ENCODE measurements at regions of chr12 and their contacts with region 1.

Region 1: DNA sequence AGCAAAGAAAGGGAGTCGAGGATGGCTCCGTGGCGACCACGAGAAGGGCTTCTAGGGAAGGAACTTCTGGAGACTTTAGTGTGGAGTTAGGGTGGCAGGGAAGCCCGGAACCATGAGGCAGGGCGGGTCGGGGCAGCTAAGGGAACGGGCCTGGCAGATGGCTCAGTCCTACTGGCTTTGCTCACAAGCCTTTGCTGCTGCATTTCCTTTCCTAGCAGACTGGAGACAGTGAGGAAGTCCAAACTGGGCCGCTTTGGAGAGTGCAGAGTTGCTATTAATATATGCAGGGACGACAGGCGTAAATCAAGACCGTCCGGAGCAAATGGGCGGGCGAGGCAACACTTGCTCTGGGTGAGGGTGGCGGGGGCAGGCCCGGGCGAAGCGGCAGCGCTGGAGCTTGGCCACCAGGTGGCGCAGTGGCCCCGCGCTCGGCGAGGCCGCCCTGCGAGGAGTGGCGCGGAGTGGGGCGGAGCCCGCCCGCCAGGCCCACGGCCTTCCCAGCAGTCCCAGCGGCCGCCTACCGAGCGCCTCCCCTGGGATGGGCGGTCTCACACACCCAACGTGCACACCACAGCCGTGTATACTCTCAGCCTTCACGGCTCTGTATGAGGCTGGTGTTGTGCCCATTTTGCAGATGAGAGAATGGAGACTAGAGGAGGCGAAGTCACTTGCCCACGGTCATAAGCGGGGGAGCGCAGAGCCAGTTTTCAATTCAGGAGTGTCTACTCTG is 24.4 kb upstream of the LRTM2 start:
- DNase-seq: peak; percentile 89
- H3K4me3 ChIP-seq: peak overlapping the region; percentile 32 to 62 (median 35)
- H3K27ac ChIP-seq: no peak overlapping the region
- H3K4me1 ChIP-seq: peaks cover 12% of the 10 kb centered on the region
- H3K27me3 ChIP-seq: no peaks in the 10 kb centered on the region
- CTCF ChIP-seq: peak; percentile 88 to 99
- POLR2A ChIP-seq: peak; percentile 67

Region 2: DNA sequence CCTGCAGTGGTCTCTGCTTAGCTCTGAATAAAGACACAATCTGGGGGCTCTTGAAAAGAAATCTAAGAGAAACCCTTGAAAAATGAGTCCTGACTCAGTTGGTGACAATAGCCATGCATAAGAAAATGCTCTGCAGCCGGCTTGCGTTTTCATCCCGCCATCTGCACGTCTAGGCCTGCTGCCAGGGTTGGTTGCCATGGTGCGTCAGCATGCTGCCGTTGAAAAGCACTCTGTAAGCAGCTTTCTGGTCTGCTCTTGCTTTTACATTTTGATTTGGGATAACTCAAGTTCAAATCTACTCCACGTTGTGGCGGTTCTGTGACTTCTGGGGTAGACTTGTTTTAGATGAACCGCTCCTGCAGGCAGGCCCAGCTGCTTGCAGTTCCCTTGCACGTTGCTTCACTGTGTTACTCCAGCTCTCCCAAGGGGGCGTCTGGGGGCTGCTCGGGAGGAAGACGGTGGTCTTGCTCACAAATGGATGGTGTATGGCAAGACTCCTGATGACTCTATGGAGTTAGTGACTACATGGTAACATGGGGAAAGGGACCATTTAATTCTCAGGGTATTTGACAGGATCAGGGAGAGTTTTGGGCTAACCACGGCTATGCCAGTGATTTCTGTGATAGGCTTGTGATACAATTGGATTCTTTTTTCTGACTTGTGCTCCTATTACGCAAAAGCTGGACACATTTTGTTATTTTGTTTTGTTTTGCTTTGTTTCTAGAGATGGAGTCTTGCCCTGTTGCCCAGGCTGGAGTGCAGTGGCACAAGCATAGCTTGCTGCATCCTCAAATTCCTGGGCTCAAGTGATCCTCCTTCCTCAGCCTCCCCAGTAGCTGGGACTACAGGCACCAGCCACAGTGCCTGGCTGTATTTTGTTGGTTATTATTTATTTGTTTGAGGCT is 151.2 kb before region 1 on chr12:
- CTCF ChIA-PET with region 1: interaction called, 840 read pairs
- POLR2A ChIA-PET with region 1: no interaction called
- dilution Hi-C with region 1: no loop called
- intact Hi-C with region 1: no loop called
- DNase-seq: peak; percentile 82
- H3K4me3 ChIP-seq: no peak overlapping the region
- H3K27ac ChIP-seq: no peak overlapping the region
- H3K4me1 ChIP-seq: no peaks in the 10 kb centered on the region
- H3K27me3 ChIP-seq: peaks cover 24 to 27% of the 10 kb centered on the region in 2 experiments
- CTCF ChIP-seq: no peak
- POLR2A ChIP-seq: no peak

Region 3: GRCh38 chr12:1668833-1669543 is 127.0 kb before region 1 on chr12:
- CTCF ChIA-PET with region 1: interaction called, 13 read pairs
- POLR2A ChIA-PET with region 1: no interaction called
- dilution Hi-C with region 1: no loop called
- intact Hi-C with region 1: no loop called
- DNase-seq: peak; percentile 76
- H3K4me3 ChIP-seq: no peak overlapping the region
- H3K27ac ChIP-seq: no peak overlapping the region
- H3K4me1 ChIP-seq: peaks cover 8% of the 10 kb centered on the region
- H3K27me3 ChIP-seq: no peaks in the 10 kb centered on the region
- CTCF ChIP-seq: no peak
- POLR2A ChIP-seq: no peak

Region 4: GRCh38 chr12:1698638-1699214 is 97.2 kb before region 1 on chr12:
- CTCF ChIA-PET with region 1: interaction called, 20 read pairs
- POLR2A ChIA-PET with region 1: no interaction called
- dilution Hi-C with region 1: no loop called
- intact Hi-C with region 1: no loop called
- DNase-seq: no peak
- H3K4me3 ChIP-seq: no peak overlapping the region
- H3K27ac ChIP-seq: no peak overlapping the region
- H3K4me1 ChIP-seq: no peaks in the 10 kb centered on the region
- H3K27me3 ChIP-seq: no peaks in the 10 kb centered on the region
- CTCF ChIP-seq: no peak
- POLR2A ChIP-seq: no peak

Region 5: GRCh38 chr12:1781772-1782171 is 14.2 kb before region 1 on chr12:
- CTCF ChIA-PET with region 1: interaction called, 11 read pairs
- POLR2A ChIA-PET with region 1: no interaction called
- dilution Hi-C with region 1: no loop called
- intact Hi-C with region 1: no loop called
- DNase-seq: no peak
- H3K4me3 ChIP-seq: no peak overlapping the region
- H3K27ac ChIP-seq: no peak overlapping the region
- H3K4me1 ChIP-seq: peaks cover 9% of the 10 kb centered on the region
- H3K27me3 ChIP-seq: no peaks in the 10 kb centered on the region
- CTCF ChIP-seq: no peak
- POLR2A ChIP-seq: no peak

Region 6: DNA sequence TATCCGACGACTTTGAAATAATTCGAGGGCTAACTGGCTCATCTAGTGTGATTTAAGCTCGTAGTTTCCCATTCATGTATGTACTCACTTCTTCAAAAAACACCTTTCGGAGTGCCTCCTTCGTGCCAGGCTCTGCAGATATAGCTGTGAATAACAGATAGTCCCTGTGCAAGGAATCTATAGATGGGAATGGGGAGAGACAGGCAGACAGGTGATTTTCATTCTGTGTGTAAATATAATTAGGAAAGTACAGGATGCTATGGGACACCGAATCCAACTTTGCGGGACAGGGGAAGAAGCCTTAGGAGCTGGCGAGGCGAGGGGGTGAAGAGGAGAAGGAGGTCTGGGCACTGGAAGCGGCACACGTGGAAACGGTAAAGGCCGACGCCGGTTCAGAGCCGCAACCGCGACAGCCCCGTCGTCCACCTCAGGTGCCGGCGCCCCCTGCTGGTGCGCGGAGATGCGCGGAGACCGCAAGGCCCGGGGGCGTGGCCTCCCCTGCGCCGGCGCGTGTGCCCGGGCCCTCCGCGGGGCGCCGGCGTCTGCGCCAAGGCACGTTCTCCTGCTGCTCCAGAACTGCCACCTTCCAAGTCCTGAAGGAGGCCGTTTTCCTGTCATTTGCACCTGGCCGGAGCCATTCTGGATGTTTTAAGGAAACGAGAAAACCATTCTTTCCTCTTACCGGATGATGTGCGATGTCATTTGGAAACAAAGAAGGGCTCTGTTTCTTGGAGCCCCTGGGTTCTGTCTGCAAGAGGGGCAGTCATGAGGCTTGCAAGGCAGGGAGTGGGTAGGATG is 238.9 kb after region 1 on chr12:
- CTCF ChIA-PET with region 1: interaction called, 5 read pairs
- POLR2A ChIA-PET with region 1: no interaction called
- dilution Hi-C with region 1: no loop called
- intact Hi-C with region 1: loop called (anchors 2 kb)
- DNase-seq: peak; percentile 69
- H3K4me3 ChIP-seq: no peak overlapping the region
- H3K27ac ChIP-seq: no peak overlapping the region
- H3K4me1 ChIP-seq: peaks cover 2% of the 10 kb centered on the region
- H3K27me3 ChIP-seq: peaks cover 12 to 24% of the 10 kb centered on the region in 2 experiments
- CTCF ChIP-seq: peak; percentile 90 to 94
- POLR2A ChIP-seq: no peak

Measured in endothelial cell of umbilical vein (primary cell).